ENCODE measurements at regions of chr4 and their contacts with region 1.

Region 1: GRCh38 chr4:156487107-156487506 is 484.5 kb downstream of the PDGFC start:
- DNase-seq: no peak
- ATAC-seq: no peak
- H3K4me3 ChIP-seq: no peak overlapping the region
- H3K27ac ChIP-seq: no peak overlapping the region
- H3K4me1 ChIP-seq: no peaks in the 10 kb centered on the region
- H3K27me3 ChIP-seq: no peaks in the 10 kb centered on the region
- CTCF ChIP-seq: no peak
- EP300 ChIP-seq: no peak
- POLR2A ChIP-seq: no peak
- RAD21 ChIP-seq: no peak

Region 2: DNA sequence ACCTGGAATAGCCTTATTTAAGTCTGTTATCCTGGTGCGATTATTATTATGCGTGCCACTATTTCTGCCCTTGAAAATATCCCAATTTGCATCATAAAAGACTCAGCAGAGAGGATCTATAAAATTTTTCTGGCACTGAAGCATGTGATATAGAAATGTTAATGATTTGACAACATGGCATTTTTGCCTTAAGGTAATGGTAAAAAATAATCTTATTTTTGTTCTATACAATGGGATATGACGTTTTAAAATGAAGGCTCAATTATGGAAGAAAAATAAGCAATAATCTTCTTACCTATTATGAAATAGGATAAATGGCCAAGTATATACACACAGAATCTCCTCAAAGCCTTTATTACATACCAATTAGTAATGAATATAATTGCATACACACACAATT is 371.0 kb after region 1 on chr4:
- CTCF ChIA-PET with region 1: no interaction called
- POLR2A ChIA-PET with region 1: no interaction called
- RAD21 ChIA-PET with region 1: no interaction called
- SMC1A ChIA-PET with region 1: no interaction called
- in situ Hi-C with region 1: no loop called
- intact Hi-C with region 1: loop called (anchors 10 kb)
- DNase-seq: no peak
- ATAC-seq: no peak
- H3K4me3 ChIP-seq: no peak overlapping the region
- H3K27ac ChIP-seq: no peak overlapping the region
- H3K4me1 ChIP-seq: no peaks in the 10 kb centered on the region
- H3K27me3 ChIP-seq: no peaks in the 10 kb centered on the region
- CTCF ChIP-seq: no peak
- EP300 ChIP-seq: no peak
- POLR2A ChIP-seq: no peak
- RAD21 ChIP-seq: no peak

Measured in GM12878 (cell line).